Activated CD4-positive, alpha-beta memory T cell treated with anti-CD3 and anti-CD28 coated beads for 36 hours (primary cell): ENCODE measurements at regions of chr12 and their contacts with region 1.

Region 1: DNA sequence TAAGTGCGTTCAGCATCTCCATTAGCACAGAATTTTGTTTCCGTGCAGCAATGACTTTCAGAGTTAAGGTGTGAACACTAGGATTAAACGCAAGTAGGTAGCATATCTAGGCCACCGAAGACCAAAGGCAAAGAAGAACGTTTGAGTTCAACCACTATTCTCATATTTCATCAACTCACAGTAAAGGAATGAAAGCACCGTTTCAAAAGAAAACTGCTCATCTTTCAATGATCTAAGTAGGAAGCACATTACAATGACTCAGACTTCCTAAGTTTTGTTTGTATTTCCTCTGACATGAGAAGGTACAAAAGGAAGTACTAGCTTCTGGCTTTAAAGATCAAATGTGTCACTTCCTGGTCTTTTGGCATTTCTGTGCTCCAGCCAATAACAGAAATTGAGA is 57.6 kb downstream of the ACADS start:
- DNase-seq: peak; percentile 49
- H3K4me3 Mint-ChIP-seq: peak overlapping the region; percentile 7
- H3K27ac Mint-ChIP-seq: peak overlapping the region; percentile 60
- H3K4me1 Mint-ChIP-seq: peaks cover 35% of the 10 kb centered on the region
- H3K27me3 Mint-ChIP-seq: no peaks in the 10 kb centered on the region

Region 2: DNA sequence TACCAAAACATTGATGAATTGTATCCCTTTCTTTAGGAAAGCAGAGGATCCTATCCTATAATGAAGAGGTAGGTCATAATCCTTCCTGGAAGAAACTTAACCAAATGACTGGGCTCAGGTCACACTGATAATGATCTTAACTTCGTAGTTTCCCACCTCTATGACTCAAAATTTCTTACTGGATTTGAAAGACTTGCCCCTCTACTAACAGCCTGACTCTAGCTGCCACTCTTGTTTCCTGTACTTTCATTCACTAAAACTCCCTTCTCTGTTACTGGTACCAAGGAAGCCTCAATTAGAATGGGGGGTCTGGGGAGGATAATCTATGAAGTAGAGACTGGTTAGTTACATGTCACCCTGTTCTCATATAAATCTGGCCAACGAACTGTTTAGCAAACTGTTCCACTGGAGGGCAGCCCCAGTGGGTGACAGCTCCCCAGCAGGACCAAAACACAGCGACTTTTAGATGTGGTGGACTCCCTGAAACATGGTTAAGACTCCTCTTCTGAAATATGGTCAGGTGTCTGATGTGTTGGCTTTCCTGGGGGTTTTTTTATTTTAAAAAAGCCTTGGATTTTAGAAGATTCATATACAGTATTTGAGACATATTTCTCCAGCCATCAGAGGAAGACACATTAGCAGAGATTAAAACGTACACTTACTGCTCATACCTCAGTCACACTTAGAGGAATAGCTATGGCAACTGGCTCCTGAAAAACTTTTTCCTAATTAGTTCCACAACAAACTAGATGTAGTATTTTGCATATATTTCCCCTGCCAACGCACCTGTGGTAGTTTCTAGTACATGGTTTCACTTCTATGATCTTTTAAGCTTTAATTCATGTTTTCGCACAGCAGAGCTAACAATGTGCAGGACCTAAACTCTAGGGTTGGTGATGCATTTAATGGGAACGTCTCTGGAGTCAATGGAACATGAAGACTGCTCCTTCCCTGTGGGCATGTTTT is 14.8 kb after region 1 on chr12:
- CTCF ChIA-PET with region 1: interaction called, 21 read pairs
- POLR2A ChIA-PET with region 1: interaction called, 6 read pairs
- intact Hi-C with region 1: loop called (anchors 1 kb)
- DNase-seq: peak; percentile 21
- H3K4me3 Mint-ChIP-seq: no peak overlapping the region
- H3K27ac Mint-ChIP-seq: peak overlapping the region; percentile 82
- H3K4me1 Mint-ChIP-seq: peaks cover 59% of the 10 kb centered on the region
- H3K27me3 Mint-ChIP-seq: no peaks in the 10 kb centered on the region

Region 3: DNA sequence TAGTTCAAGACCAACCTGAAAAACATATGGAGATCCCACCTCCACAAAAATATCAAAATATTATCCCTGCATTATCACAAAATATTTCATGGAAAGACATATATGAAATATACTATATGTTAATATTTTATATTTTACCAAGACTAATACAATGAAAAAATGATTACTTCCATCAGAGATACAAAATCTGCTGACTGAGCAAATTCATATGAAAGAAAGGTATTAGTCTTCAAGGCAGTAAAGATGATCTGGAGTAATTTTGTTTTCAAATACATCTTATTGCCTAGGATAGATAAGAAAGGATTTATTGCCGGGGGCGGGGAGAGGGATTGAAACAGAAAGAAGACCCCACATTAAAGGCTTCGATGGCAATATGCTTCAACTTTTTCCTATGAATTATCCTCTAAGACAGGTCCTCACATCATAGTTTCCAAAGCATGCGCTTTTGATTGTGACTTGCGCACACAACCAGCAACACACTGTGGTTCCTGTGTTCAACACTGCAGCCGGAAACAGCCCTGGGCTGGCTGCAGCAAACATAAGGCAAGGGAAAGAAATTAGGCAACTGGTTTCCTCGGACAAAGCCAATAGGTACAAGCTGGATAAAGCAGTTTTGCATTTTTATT is 37.8 kb after region 1 on chr12:
- CTCF ChIA-PET with region 1: no interaction called
- POLR2A ChIA-PET with region 1: no interaction called
- intact Hi-C with region 1: loop called (anchors 1 kb)
- DNase-seq: peak; percentile 70
- H3K4me3 Mint-ChIP-seq: peak overlapping the region; percentile 34
- H3K27ac Mint-ChIP-seq: peak overlapping the region; percentile 66
- H3K4me1 Mint-ChIP-seq: peaks cover 44% of the 10 kb centered on the region
- H3K27me3 Mint-ChIP-seq: no peaks in the 10 kb centered on the region

Region 4: DNA sequence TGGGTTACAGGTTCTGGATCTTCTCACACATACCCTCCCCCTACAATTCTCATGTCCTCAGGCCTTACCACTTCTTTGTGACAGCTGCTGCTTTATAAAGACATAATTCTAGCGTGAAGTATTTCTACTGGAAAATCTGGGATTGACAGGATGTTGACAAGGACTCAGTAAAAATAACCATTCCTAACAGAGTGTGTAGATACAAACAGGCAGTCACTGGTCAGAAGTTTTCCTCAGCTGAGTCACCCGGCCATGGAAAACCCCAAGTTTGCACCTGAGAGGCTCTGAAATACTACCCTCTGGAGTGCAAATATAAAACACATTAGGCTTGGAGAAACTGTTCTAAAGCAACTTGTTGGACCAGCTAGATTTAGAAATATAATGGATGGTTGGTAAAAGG is 66.6 kb after region 1 on chr12:
- CTCF ChIA-PET with region 1: interaction called, 3 read pairs
- POLR2A ChIA-PET with region 1: interaction called, 3 read pairs
- intact Hi-C with region 1: loop called (anchors 5 kb)
- DNase-seq: peak; percentile 20
- H3K4me3 Mint-ChIP-seq: no peak overlapping the region
- H3K27ac Mint-ChIP-seq: no peak overlapping the region
- H3K4me1 Mint-ChIP-seq: peaks cover 57% of the 10 kb centered on the region
- H3K27me3 Mint-ChIP-seq: no peaks in the 10 kb centered on the region

Region 5: GRCh38 chr12:120961604-120962531 is 178.7 kb after region 1 on chr12:
- CTCF ChIA-PET with region 1: interaction called, 3 read pairs
- POLR2A ChIA-PET with region 1: no interaction called
- intact Hi-C with region 1: loop called (anchors 1 kb)
- DNase-seq: no peak
- H3K4me3 Mint-ChIP-seq: no peak overlapping the region
- H3K27ac Mint-ChIP-seq: no peak overlapping the region
- H3K4me1 Mint-ChIP-seq: peaks cover 36% of the 10 kb centered on the region
- H3K27me3 Mint-ChIP-seq: no peaks in the 10 kb centered on the region

Region 6: DNA sequence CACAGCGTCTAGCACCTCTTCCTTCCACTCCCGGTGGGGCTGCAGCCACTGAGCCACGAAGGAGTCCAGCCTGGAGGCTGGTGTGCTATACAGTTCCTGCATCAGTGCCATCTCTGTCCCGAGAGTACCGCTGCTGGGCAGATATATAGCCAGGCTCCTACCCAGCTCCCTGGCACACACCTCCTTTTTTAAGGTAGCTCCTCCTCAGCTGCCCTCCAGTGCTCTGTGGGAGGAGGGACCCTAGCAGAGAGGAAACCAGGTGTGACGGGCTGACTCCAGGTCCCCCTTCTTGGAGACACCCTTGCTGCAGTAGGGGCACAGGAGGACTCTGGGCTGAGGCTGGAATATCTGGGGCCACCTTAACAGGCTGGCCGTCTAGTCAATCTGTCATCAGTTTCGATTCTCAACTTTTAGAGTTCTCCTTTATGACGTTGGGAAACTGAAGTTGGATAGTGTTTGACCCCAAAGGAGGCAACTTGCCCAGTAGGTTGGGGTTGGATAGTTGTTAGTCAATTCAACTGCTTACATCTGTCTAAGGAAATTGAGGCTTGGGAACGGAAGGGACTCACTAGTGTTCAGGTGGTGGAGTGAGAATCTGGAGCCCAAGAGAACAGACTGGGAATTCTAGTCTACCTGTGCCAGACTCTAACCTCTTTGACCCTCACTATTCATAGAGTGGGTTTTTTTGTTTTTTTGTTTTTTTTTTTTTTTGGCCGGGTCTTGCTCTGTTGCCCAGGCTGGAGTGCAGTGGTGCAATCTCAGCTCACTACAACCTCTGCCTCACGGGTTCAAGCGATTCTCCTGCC is 255.9 kb after region 1 on chr12 and contains the start of gene OASL:
- CTCF ChIA-PET with region 1: no interaction called
- POLR2A ChIA-PET with region 1: no interaction called
- intact Hi-C with region 1: loop called (anchors 5 kb)
- DNase-seq: peak; percentile 75
- H3K4me3 Mint-ChIP-seq: peak within 1 kb of the TSS; percentile 85
- H3K27ac Mint-ChIP-seq: peak within 1 kb of the TSS; percentile 84
- H3K4me1 Mint-ChIP-seq: peaks cover 50% of the 10 kb centered on the region
- H3K27me3 Mint-ChIP-seq: peaks cover 9% of the 10 kb centered on the region
- total RNA-seq, gene OASL: 21.9 to 26.5 TPM